MCF 10A (cell line): ENCODE measurements at regions of chr3 and their contacts with region 1.

Region 1: DNA sequence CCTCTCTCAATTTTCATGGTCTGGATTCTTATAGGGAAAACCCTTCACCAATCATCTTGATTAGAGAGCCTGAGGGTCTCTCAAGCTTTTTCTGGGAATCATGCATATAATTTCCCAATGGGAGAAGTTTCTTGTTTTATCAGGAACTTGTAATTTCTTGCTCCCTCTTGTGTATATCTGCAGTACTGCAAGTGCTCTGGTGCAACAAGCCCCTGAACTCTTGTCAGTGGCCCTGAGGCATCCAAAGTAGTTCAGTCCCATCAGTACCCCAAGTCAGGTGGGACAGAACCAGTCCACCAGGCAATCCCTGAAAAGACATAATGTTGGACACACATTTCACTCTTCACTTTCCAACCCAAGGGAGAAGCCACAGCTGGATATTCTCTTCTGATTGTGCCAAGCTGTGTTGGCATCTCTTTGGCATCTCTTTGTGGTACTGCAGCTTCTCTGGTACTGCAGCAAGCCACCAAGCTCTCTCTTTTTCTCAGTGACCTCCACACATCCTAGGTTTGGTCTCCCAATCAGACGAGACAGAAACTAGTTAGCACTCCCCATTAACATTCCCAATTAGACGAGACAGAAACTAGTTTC is 214.5 kb downstream of the ZIC4 start:
- DNase-seq: peak; percentile 61
- H3K4me3 Mint-ChIP-seq: no peak overlapping the region
- H3K27ac Mint-ChIP-seq: no peak overlapping the region
- H3K4me1 Mint-ChIP-seq: no peaks in the 10 kb centered on the region
- H3K27me3 Mint-ChIP-seq: peaks cover 48% of the 10 kb centered on the region
- CTCF ChIP-seq: peak; percentile 76

Region 2: DNA sequence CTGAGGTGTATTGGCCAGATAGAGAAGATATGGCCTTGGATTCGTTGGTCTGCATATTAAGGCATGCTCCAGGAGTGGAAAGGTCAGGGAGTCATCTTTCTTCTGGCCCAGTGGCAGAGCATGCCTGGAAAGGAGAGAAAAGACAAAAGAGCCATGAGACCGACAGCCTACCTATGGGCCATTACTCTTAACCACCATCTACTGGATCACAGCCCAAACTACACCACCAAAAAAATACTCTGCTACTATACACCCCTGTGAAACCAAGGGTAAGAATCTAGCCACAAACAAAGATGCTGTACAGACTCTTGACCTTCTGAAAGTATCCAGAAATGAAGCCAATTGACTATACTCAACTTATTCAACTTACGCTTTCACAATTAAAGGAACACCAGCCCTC is 490.6 kb before region 1 on chr3:
- CTCF ChIA-PET with region 1: no interaction called
- POLR2A ChIA-PET with region 1: no interaction called
- intact Hi-C with region 1: no loop called
- DNase-seq: no peak
- H3K4me3 Mint-ChIP-seq: no peak overlapping the region
- H3K27ac Mint-ChIP-seq: no peak overlapping the region
- H3K4me1 Mint-ChIP-seq: no peaks in the 10 kb centered on the region
- H3K27me3 Mint-ChIP-seq: peaks cover 32% of the 10 kb centered on the region
- CTCF ChIP-seq: no peak

Region 3: GRCh38 chr3:146747928-146748327 is 444.0 kb before region 1 on chr3:
- CTCF ChIA-PET with region 1: interaction called, 8 read pairs
- POLR2A ChIA-PET with region 1: no interaction called
- intact Hi-C with region 1: loop called (anchors 1 kb)
- DNase-seq: peak; percentile 13
- H3K4me3 Mint-ChIP-seq: no peak overlapping the region
- H3K27ac Mint-ChIP-seq: no peak overlapping the region
- H3K4me1 Mint-ChIP-seq: no peaks in the 10 kb centered on the region
- H3K27me3 Mint-ChIP-seq: peaks cover 32% of the 10 kb centered on the region
- CTCF ChIP-seq: no peak

Region 4: DNA sequence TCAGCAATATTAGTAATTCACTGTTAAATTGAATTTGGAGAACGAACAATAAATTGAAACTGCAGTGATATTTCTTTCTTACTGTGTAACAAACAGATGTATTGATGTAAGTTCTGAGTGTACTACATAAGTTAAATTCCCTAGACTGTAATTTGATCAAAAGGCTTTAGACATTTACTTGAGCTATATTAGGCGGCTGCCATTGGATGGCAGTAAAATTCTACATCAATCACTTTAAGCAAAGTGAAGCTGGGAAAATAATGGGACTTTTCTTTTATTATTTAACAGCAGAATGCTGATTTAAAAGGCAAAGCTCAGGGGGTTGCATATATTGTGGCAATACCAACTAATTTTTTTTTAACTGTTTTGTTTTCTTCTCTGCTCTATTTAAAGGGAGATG is 374.2 kb before region 1 on chr3:
- CTCF ChIA-PET with region 1: no interaction called
- POLR2A ChIA-PET with region 1: no interaction called
- intact Hi-C with region 1: loop called (anchors 1 kb)
- DNase-seq: peak; percentile 15
- H3K4me3 Mint-ChIP-seq: no peak overlapping the region
- H3K27ac Mint-ChIP-seq: no peak overlapping the region
- H3K4me1 Mint-ChIP-seq: no peaks in the 10 kb centered on the region
- H3K27me3 Mint-ChIP-seq: peaks cover 95% of the 10 kb centered on the region
- CTCF ChIP-seq: peak; percentile 31

Region 5: GRCh38 chr3:146873748-146874147 is 318.1 kb before region 1 on chr3:
- CTCF ChIA-PET with region 1: no interaction called
- POLR2A ChIA-PET with region 1: no interaction called
- intact Hi-C with region 1: no loop called
- DNase-seq: no peak
- H3K4me3 Mint-ChIP-seq: no peak overlapping the region
- H3K27ac Mint-ChIP-seq: no peak overlapping the region
- H3K4me1 Mint-ChIP-seq: no peaks in the 10 kb centered on the region
- H3K27me3 Mint-ChIP-seq: peaks cover 86% of the 10 kb centered on the region
- CTCF ChIP-seq: no peak

Region 6: DNA sequence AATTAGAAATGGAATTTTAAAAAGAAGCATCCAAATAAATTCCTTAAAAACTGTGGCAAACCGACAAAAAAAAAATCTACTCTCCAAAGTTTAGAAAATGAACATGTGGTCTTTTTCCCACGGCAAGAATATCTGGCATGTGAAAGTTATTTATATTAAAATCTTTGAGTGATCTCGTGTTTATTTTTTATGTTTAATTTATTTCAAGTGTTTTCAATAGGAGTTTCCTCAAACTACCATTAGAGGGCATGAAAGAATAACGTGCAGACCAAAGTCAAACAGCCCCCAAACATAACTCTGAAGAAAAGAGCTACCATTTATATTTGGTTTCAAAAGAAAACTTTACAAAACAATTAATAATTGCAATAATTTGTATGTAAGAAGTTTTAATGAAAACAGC is 71.9 kb before region 1 on chr3:
- CTCF ChIA-PET with region 1: interaction called, 5 read pairs
- POLR2A ChIA-PET with region 1: no interaction called
- intact Hi-C with region 1: loop called (anchors 2 kb)
- DNase-seq: peak; percentile 6
- H3K4me3 Mint-ChIP-seq: no peak overlapping the region
- H3K27ac Mint-ChIP-seq: no peak overlapping the region
- H3K4me1 Mint-ChIP-seq: no peaks in the 10 kb centered on the region
- H3K27me3 Mint-ChIP-seq: peaks cover 14% of the 10 kb centered on the region
- CTCF ChIP-seq: peak; percentile 36